ENCODE measurements at regions of chr12 and their contacts with region 1.

Region 1: GRCh38 chr12:1690578-1691122 is at the start of gene ADIPOR2:
- DNase-seq: peak; percentile 94
- ATAC-seq: peak; percentile 96
- H3K4me3 Mint-ChIP-seq: peak within 1 kb of the TSS; percentile 88
- H3K27ac Mint-ChIP-seq: peak within 1 kb of the TSS; percentile 98
- H3K4me1 Mint-ChIP-seq: peaks cover 39% of the 10 kb centered on the region
- H3K27me3 Mint-ChIP-seq: peaks cover 5% of the 10 kb centered on the region
- CTCF ChIP-seq: no peak
- total RNA-seq, gene ADIPOR2: 43.0 and 43.1 TPM in 2 replicates

Region 2: DNA sequence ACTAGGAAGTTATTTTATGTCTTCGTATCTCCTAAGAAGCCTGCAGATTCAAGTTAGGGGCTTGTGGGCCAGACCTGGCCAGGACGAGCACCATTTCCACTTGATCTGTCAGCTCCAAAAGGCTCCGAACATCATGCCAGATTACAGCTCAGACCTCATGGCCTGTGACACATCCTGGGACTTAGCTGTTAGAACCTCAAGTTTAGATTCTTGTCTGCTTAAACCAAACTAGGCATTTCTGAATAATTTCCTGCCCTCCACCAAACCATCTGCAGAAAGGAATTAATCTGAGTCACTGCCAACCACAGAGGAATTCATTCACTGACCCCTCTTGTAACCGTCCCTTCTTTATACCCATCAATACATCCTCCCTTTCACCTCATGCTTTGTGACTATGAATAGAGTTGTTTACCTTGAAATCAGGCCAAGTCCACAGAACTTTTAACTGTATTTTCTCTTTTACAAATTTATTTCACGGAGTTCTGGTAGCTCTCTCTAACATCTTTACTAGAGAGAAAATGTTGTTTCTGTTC is 216.5 kb before region 1 on chr12:
- CTCF ChIA-PET with region 1: no interaction called
- POLR2A ChIA-PET with region 1: no interaction called
- intact Hi-C with region 1: no loop called
- DNase-seq: no peak
- ATAC-seq: no peak
- H3K4me3 Mint-ChIP-seq: no peak overlapping the region
- H3K27ac Mint-ChIP-seq: no peak overlapping the region
- H3K4me1 Mint-ChIP-seq: peaks cover 6% of the 10 kb centered on the region
- H3K27me3 Mint-ChIP-seq: no peaks in the 10 kb centered on the region
- CTCF ChIP-seq: no peak

Region 3: DNA sequence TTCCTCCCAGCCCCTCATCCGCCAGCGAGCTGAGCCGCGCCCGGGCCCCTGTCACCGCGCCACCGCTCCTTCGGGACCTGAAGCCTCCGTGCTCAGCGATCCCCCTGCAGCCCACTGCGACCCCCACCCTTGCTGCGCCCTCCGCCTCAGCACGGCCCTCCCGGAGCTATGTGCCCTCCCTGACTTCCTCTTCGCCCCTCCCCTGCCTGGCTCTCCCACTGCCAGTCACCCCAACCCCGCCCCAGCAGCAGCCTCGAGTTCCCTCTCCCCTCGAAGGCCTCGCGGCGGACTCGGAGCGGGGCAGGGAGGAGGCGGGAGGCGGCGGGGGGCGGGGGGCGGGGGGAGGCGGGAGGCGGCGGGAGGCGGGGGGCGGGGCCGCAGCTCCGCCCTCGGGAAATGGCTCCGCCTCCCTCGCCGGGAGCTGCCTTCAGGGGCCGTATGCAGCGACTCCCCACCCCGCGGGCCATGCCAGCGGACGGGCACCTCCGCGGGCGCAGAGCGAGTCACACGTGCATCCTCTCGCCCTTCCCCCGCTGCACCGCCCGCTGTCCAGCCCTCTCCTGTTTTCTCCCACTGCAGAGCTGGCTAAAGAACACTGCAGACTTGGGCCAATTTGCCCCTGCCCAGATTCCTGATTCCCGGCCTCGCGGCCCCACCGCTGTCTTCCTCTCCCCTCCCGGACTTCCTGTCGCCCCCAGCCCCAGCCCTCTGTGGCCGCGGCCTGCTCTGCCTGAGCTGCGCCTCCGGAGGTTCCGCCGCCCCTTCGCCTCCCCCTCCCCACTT is 28.9 kb before region 1 on chr12:
- CTCF ChIA-PET with region 1: interaction called, 6 read pairs
- POLR2A ChIA-PET with region 1: interaction called, 29 read pairs
- intact Hi-C with region 1: loop called (anchors 1 kb)
- DNase-seq: peak; percentile 75
- ATAC-seq: peak; percentile 93
- H3K4me3 Mint-ChIP-seq: peak overlapping the region; percentile 84
- H3K27ac Mint-ChIP-seq: peak overlapping the region; percentile 84
- H3K4me1 Mint-ChIP-seq: peaks cover 18% of the 10 kb centered on the region
- H3K27me3 Mint-ChIP-seq: no peaks in the 10 kb centered on the region
- CTCF ChIP-seq: no peak

Region 4: GRCh38 chr12:1716215-1716862 is 25.7 kb after region 1 on chr12:
- CTCF ChIA-PET with region 1: no interaction called
- POLR2A ChIA-PET with region 1: no interaction called
- intact Hi-C with region 1: no loop called
- DNase-seq: no peak
- ATAC-seq: no peak
- H3K4me3 Mint-ChIP-seq: no peak overlapping the region
- H3K27ac Mint-ChIP-seq: peak overlapping the region; percentile 54
- H3K4me1 Mint-ChIP-seq: peaks cover 33% of the 10 kb centered on the region
- H3K27me3 Mint-ChIP-seq: no peaks in the 10 kb centered on the region
- CTCF ChIP-seq: no peak

Region 5: GRCh38 chr12:2215670-2216560 is 525.3 kb after region 1 on chr12:
- CTCF ChIA-PET with region 1: no interaction called
- POLR2A ChIA-PET with region 1: no interaction called
- intact Hi-C with region 1: no loop called
- DNase-seq: no peak
- ATAC-seq: no peak
- H3K4me3 Mint-ChIP-seq: no peak overlapping the region
- H3K27ac Mint-ChIP-seq: no peak overlapping the region
- H3K4me1 Mint-ChIP-seq: no peaks in the 10 kb centered on the region
- H3K27me3 Mint-ChIP-seq: peaks cover 10% of the 10 kb centered on the region
- CTCF ChIP-seq: no peak